ENCODE measurements at regions of chr21 and their contacts with region 1.

Region 1: DNA sequence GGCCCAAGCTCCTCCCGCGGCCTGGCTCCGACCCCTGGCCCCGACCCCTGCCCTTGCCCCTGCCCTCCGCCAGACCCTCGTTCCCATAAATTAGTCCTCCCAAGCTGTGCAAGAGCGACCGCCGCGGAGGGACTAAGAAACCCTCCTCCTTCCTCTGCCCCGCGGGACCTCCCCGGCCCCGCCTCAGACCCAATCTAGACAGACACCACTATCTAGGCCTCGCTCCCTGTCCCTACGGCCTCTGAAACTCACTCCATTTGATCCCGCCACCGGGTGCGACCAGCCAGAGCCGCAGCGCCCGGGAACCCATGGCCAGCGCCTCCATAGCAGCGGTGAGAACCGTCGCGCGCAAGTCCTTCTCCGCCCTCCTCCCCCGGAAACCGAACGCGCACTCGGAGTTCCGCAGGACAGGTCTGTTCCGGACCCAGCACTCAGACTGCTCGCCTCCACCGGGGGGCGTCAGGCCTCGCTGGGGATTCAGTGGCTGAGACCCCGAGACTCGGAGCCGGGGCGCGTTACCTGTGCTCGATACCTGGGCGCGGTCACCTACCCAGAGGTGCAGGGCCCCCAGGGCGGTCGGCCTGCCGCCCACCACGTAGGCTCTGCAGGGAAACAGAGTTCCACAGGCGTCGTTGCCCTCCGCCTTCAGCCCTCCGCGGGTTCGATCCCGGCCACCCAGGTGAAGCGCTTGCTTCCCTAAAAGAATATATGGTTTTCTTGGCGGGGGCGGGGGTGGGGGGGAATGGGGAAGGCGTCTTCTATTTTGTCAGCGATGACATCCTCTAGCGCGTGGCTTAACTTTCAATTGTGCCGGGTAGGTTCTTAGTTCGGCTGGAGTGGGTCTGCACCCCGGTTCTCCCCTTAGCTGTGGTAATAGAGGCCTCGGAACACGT is at the start of gene MRPL39:
- DNase-seq: peak; percentile 86
- H3K4me3 Mint-ChIP-seq: peak within 1 kb of the TSS; percentile 83
- H3K27ac Mint-ChIP-seq: peak within 1 kb of the TSS; percentile 88
- H3K4me1 Mint-ChIP-seq: no peaks in the 10 kb centered on the region
- H3K27me3 Mint-ChIP-seq: no peaks in the 10 kb centered on the region
- CTCF ChIP-seq: peak; percentile 35
- total RNA-seq, gene MRPL39: 20.0 and 20.6 TPM in 2 replicates

Region 2: DNA sequence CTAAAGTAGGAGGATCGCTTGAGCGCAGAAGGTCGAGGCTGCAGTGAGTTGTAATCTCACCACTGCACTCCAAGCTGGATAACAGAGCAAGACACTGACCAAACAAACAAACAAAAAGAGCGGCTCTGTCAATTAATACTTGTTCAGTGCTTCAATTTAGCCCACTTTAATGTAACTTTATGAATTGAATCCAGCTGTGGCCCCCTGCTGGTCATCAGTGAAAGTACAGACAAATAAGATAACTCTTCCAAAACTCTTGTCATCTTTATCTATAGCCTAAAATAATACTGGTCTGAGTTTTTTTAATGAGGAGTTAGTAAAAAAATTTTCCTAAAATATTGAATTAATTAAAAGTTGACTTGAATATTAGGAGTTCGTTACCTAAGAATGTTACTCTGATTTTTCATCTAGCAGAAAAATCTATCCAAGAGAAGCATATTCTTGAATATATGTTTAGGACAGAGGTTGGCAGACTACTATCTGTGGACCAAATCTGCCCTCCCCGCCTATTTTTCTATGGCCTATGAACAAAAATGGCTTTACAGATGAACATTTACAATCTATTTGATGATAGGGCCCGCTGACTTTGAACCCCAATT is 101.2 kb after region 1 on chr21:
- CTCF ChIA-PET with region 1: no interaction called
- intact Hi-C with region 1: loop called (anchors 1 kb)
- DNase-seq: peak; percentile 2
- H3K4me3 Mint-ChIP-seq: no peak overlapping the region
- H3K27ac Mint-ChIP-seq: no peak overlapping the region
- H3K4me1 Mint-ChIP-seq: no peaks in the 10 kb centered on the region
- H3K27me3 Mint-ChIP-seq: no peaks in the 10 kb centered on the region
- CTCF ChIP-seq: peak; percentile 47

Region 3: DNA sequence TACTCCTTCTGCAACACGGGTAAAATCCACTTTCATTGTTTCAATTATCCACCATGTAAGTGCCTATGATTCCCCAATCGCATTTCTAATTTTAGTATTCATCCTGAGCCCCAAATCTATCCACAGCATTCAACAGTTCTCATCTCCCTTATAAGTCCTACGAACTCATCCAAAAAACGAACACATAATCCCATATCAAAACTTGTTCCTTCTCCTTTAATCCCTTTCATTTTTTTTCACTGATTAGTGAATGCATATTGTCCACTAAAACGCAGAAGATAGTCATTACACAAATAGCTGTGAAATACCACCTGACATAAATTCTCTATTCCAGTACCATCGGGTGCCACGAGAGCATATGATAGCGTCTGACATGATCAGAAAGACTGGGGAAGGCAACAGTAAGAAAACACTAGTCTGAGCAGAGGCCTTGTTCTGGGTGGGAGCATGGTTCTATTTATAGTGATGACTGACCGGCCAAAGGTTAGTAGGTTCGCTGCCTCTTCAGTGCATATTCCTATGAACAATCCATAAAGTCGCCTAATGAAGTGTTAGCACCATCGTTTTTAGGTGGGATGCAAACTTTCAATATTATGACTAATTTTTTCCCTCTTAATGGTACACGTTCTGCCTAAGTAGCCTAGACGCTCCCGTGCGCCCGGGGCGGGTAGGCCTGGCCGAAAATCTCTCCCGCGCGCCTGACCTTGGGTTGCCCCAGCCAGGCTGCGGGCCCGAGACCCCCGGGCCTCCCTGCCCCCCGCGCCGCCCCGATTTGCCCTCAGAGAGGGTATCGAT is 126.7 kb after region 1 on chr21:
- CTCF ChIA-PET with region 1: no interaction called
- intact Hi-C with region 1: loop called (anchors 5 kb)
- DNase-seq: peak; percentile 2
- H3K4me3 Mint-ChIP-seq: peak overlapping the region; percentile 87
- H3K27ac Mint-ChIP-seq: peak overlapping the region; percentile 100
- H3K4me1 Mint-ChIP-seq: peaks cover 7% of the 10 kb centered on the region
- H3K27me3 Mint-ChIP-seq: no peaks in the 10 kb centered on the region
- CTCF ChIP-seq: no peak

Region 4: DNA sequence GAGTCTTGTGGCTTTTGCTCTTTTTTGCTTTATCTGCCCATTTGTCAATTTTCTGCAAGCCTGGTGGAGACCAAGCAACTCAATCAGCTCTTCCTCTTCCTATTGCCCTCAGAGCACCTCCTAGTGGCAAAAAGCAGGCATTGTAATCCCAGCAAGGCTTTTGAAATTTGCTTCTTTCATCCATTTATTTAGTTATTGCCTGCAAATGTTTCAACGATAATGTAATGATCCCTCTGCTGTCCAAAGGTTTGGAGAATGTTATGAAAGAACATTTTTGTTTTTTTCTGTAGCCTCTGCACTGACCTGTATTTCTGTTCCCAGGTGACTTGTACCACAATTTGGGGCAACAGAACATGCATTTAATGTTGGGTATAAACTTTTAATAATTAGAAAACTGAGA is 255.2 kb after region 1 on chr21:
- CTCF ChIA-PET with region 1: no interaction called
- intact Hi-C with region 1: loop called (anchors 10 kb)
- DNase-seq: peak; percentile 3
- H3K4me3 Mint-ChIP-seq: no peak overlapping the region
- H3K27ac Mint-ChIP-seq: no peak overlapping the region
- H3K4me1 Mint-ChIP-seq: no peaks in the 10 kb centered on the region
- H3K27me3 Mint-ChIP-seq: no peaks in the 10 kb centered on the region
- CTCF ChIP-seq: peak; percentile 38